Heart left ventricle (tissue), 16 donors: ENCODE measurements at regions of chr17 and their contacts with region 1.

Region 1: DNA sequence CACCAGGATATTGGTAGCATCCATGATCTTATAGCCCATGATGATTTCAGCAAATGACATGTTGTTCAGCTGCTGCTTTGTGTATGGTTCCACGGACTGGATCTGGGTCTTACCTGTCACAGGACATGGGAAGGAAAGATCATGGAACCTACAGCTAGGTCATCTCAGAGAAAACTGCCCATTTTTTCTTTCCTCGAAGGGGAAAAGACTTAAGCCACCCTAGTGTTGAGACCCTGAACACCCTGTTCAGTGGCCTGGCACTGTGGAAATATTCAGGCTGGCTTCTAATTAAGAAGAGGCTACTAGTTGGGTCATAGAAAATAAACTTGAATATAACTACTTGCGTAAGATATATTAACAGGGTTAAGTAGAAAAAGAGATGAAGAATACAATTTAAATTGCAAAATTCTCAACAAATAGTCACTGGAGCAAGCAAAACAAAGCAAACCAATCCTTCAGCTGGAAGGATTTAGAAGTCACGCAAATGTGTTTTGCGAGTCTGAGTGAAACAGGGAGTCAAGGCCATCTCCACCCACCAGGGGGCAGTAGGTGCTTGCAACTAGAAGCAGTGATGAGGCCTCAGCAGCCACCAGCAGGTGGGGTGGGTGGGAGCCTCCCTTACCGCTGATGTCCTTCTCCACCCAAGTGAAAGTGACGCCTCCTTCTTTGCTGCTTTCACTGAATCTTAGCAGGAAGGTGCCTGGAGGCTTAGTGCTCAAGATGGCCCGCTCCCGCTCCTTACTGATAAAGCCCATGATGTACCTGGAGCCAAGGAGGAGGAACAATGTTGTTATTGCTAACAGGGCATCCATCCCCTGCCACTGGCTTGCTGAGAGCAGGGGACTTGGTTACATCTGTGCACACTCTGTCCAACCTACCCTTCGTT is 34.3 kb downstream of the STAT5A start:
- DNase-seq: peak; percentile 90 to 94 (median 92)
- ATAC-seq: peak; percentile 60 to 80 (median 78)
- H3K4me3 ChIP-seq: no peak overlapping the region
- H3K27ac ChIP-seq: peak overlapping the region in 4 of 12 donors; percentile 9 to 47 (median 26)
- H3K4me1 ChIP-seq: peaks cover 0 to 38% (median 17%) of the 10 kb centered on the region in 12 donors
- H3K27me3 ChIP-seq: no peaks in the 10 kb centered on the region
- CTCF ChIP-seq: peak; percentile 97 to 100 (median 100)
- POLR2A ChIP-seq: no peak

Region 2: DNA sequence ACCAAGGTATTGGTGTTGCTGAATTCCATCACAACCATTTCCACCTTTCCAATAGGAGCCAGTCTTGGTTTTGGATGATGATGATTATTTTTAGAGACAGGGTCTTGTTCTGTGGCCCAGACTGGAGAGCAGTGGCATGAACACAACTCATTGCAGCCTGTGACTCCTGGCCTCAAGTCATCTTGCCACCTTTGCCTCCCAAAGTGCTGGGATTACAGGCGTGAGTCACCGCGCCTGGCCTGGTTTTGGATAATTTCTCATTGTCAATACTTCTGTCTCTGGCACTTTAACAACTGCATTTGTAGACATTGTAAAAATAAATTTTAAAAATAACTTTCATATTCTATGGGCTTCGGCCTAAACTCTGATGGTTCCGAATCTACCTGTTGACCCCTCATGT is 69.0 kb before region 1 on chr17:
- intact Hi-C with region 1: no loop called
- DNase-seq: no peak
- ATAC-seq: no peak
- H3K4me3 ChIP-seq: no peak overlapping the region
- H3K27ac ChIP-seq: peak overlapping the region in 3 of 12 donors; percentile 7 to 67 (median 52)
- H3K4me1 ChIP-seq: peaks cover 3 to 61% (median 25%) of the 10 kb centered on the region in 12 donors
- H3K27me3 ChIP-seq: no peaks in the 10 kb centered on the region
- CTCF ChIP-seq: no peak
- POLR2A ChIP-seq: no peak

Region 3: GRCh38 chr17:42361781-42362186 is 39.2 kb after region 1 on chr17:
- intact Hi-C with region 1: no loop called
- DNase-seq: no peak
- ATAC-seq: peak in 3 of 4 donors; percentile 44 to 63 (median 59)
- H3K4me3 ChIP-seq: no peak overlapping the region
- H3K27ac ChIP-seq: peak overlapping the region in 7 of 12 donors; percentile 25 to 60 (median 47)
- H3K4me1 ChIP-seq: peaks cover 0 to 93% (median 62%) of the 10 kb centered on the region in 12 donors
- H3K27me3 ChIP-seq: no peaks in the 10 kb centered on the region
- CTCF ChIP-seq: no peak
- POLR2A ChIP-seq: no peak

Region 4: DNA sequence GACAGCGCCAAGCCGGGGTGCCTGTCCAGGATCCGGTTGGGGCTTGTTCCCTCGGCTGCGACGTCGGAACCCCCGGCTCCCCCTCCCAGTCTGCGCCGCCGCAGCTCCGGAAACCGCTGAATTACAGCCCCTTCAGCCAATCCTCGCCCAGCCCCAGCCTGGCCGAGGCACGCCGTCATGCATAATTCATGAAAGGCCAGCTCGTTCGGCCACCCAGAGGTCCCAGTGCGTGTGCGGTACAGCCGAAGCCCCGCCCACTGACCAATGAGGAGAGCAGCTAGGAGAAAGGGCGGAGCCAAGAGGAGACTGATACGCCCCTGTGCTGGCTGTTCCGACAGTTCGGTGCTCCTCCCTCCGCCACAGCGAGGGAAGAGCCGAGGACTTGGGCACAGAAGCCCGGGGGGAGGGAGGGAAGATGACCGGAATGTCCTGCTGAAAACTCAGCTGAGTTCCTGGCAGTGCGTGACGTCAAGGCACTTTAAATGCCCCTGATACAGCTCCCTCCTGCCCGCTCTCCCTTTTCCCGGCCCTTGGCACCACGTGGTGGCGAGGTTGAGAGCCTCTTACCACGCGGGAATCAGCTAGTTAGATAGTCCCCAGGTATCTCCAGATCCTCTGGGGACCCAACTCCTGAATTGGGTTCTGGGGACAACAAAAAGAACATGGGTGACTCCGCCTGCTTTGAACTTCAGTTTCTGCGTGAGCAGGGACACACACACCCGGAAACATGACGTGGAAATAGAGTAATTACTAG is 65.9 kb after region 1 on chr17 and contains the start of gene STAT3:
- intact Hi-C with region 1: loop called in 4 of 10 experiments (anchors 5 kb)
- DNase-seq: peak; percentile 100
- ATAC-seq: peak; percentile 95 to 99 (median 98)
- H3K4me3 ChIP-seq: peak within 1 kb of the TSS; percentile 76 to 100 (median 89)
- H3K27ac ChIP-seq: peak within 1 kb of the TSS; percentile 96 to 100 (median 99)
- H3K4me1 ChIP-seq: peaks cover 3 to 49% (median 24%) of the 10 kb centered on the region in 12 donors
- H3K27me3 ChIP-seq: no peaks in the 10 kb centered on the region
- CTCF ChIP-seq: peak in 2 of 12 donors; percentile 11 to 25
- POLR2A ChIP-seq: peak in 1 of 2 donors; percentile 98
- total RNA-seq, gene STAT3: 111 to 614 (median 148) TPM

Region 5: GRCh38 chr17:42405963-42406495 is 83.4 kb after region 1 on chr17:
- intact Hi-C with region 1: loop called (anchors 1 to 2 kb)
- DNase-seq: peak; percentile 83 to 92 (median 83)
- ATAC-seq: peak; percentile 56 to 73 (median 68)
- H3K4me3 ChIP-seq: peak overlapping the region in 7 of 12 donors; percentile 8 to 33 (median 20)
- H3K27ac ChIP-seq: peak overlapping the region; percentile 65 to 100 (median 82)
- H3K4me1 ChIP-seq: peaks cover 27 to 93% (median 79%) of the 10 kb centered on the region in 12 donors
- H3K27me3 ChIP-seq: no peaks in the 10 kb centered on the region
- CTCF ChIP-seq: peak; percentile 77 to 92 (median 84)
- POLR2A ChIP-seq: no peak

Region 6: GRCh38 chr17:42459256-42459800 is 136.7 kb after region 1 on chr17:
- intact Hi-C with region 1: loop called in 2 of 10 experiments (anchors 1 to 5 kb)
- DNase-seq: peak in 4 of 5 donors; percentile 38 to 55 (median 45)
- ATAC-seq: peak; percentile 33 to 53 (median 42)
- H3K4me3 ChIP-seq: peak overlapping the region; percentile 43 to 93 (median 80)
- H3K27ac ChIP-seq: peak overlapping the region; percentile 77 to 98 (median 92)
- H3K4me1 ChIP-seq: peaks cover 0 to 73% (median 25%) of the 10 kb centered on the region in 12 donors
- H3K27me3 ChIP-seq: no peaks in the 10 kb centered on the region
- CTCF ChIP-seq: peak in 7 of 12 donors; percentile 6 to 51 (median 42)
- POLR2A ChIP-seq: no peak

Region 7: DNA sequence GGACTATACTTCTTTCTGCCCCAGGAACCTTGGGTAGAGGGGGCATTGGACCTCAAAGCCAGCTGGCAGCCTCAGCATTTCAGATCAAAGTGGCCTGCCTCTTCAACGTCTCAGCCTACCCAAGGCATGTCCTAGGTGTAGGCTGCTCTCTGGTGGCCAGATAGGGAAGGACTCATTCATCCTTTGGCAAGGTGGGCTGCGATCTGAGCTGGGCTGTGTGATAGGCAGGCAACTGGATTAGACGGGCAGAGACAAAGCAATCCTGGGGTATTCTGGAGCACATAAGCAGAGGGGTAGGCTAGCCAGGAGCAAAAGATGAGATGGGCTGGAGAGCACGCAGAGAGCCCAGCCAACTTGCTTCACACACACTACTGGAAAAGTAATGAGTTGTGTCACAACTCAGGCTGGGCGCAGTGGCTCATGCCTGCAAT is 204.7 kb after region 1 on chr17:
- intact Hi-C with region 1: loop called in 3 of 10 experiments (anchors 2 to 5 kb)
- DNase-seq: peak in 4 of 5 donors; percentile 73 to 75 (median 74)
- ATAC-seq: peak; percentile 51 to 84 (median 82)
- H3K4me3 ChIP-seq: no peak overlapping the region
- H3K27ac ChIP-seq: peak overlapping the region in 8 of 12 donors; percentile 54 to 97 (median 74)
- H3K4me1 ChIP-seq: peaks cover 0 to 51% (median 32%) of the 10 kb centered on the region in 12 donors
- H3K27me3 ChIP-seq: no peaks in the 10 kb centered on the region
- CTCF ChIP-seq: peak; percentile 72 to 87 (median 81)
- POLR2A ChIP-seq: no peak